Caco-2 (cell line): ENCODE measurements at regions of chr6 and their contacts with region 1.

Region 1: DNA sequence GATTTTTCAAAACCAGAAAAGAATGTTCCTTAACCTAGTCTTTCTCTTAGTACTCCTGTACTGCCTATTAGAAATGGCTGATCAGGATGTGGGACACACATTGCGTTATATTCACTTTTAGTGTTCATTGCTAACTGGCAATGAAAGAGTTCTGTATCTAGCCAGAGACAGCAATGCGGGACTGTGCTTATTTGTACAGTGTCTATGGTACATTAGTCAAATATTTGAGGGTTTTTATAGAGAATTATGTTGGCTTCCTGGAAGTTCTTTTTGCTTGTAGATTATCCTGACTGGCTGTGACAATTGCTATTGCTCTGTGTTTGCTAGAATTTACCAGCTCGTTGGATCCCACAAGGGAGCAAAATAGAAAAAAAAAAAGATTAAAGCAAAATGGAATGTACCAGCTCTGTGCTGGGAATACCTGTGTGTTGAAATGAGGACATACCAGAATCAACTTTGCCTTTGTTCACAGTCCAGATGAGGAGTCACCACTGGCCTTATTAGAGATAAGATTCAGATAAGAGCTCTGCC is 22.4 kb upstream of the IFNGR1 start:
- DNase-seq: peak; percentile 79 to 82
- H3K4me3 ChIP-seq: no peak overlapping the region
- H3K4me3 Mint-ChIP-seq: peak overlapping the region; percentile 27
- H3K27ac Mint-ChIP-seq: peak overlapping the region; percentile 85
- H3K4me1 ChIP-seq: peaks cover 75% of the 10 kb centered on the region
- H3K4me1 Mint-ChIP-seq: peaks cover 33% of the 10 kb centered on the region
- H3K27me3 ChIP-seq: no peaks in the 10 kb centered on the region
- H3K27me3 Mint-ChIP-seq: no peaks in the 10 kb centered on the region
- CTCF ChIP-seq: no peak

Region 2: GRCh38 chr6:137218917-137219663 is 22.5 kb before region 1 on chr6 and contains the start of gene IFNGR1:
- CTCF ChIA-PET with region 1: interaction called, 8 read pairs
- POLR2A ChIA-PET with region 1: interaction called, 9 read pairs
- intact Hi-C with region 1: loop called (anchors 1 kb)
- DNase-seq: peak; percentile 97 to 98
- H3K4me3 ChIP-seq: peak within 1 kb of the TSS; percentile 75
- H3K4me3 Mint-ChIP-seq: peak within 1 kb of the TSS; percentile 99
- H3K27ac Mint-ChIP-seq: peak within 1 kb of the TSS; percentile 96
- H3K4me1 ChIP-seq: peaks cover 19% of the 10 kb centered on the region
- H3K4me1 Mint-ChIP-seq: peaks cover 33% of the 10 kb centered on the region
- H3K27me3 ChIP-seq: no peaks in the 10 kb centered on the region
- H3K27me3 Mint-ChIP-seq: no peaks in the 10 kb centered on the region
- CTCF ChIP-seq: no peak
- total RNA-seq, gene IFNGR1: 56.9 and 58.0 TPM in 2 replicates